AG04450 (cell line): ENCODE measurements at regions of chr20 and their contacts with region 1.

Region 1: DNA sequence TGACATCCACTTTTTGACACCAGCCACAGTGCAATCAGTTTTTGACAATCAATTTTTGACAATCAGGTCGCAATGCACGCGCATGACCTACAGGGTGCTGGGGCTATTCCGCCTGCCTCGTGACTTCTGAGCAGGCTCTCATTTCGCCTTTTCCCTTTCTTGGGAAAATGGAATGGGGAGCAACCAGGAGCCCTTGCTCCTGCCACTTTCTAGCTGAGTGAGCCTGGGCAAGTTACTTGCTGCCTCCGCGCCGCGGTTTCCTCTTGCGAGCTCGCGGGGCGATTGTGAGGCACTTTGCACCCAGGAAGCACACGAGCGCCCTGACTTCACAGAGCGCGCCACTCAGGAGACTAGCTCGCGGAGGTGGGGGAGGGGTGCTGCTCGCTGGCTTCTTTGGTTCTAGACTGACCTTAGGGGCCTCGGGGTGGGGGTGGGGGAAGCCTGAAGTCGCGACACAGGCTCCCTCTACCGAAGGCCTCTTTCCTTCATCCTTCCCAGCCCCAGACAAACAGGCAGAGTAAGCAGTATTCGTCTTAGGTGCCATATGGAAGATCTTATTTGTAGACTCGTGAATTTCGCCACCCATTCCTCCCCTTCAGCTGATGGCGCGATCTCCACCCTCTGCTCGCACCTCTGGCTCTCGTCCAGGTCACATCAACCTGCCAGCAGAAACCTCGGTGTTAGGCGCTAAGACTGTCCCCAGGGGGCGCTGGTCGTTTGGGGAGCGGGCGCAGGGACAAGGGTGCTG is 4.6 kb downstream of the TP53TG5 start:
- DNase-seq: no peak
- H3K4me3 ChIP-seq: peak overlapping the region; percentile 52
- H3K27ac ChIP-seq: no peak overlapping the region
- H3K27me3 ChIP-seq: no peaks in the 10 kb centered on the region
- CTCF ChIP-seq: peak; percentile 88

Region 2: DNA sequence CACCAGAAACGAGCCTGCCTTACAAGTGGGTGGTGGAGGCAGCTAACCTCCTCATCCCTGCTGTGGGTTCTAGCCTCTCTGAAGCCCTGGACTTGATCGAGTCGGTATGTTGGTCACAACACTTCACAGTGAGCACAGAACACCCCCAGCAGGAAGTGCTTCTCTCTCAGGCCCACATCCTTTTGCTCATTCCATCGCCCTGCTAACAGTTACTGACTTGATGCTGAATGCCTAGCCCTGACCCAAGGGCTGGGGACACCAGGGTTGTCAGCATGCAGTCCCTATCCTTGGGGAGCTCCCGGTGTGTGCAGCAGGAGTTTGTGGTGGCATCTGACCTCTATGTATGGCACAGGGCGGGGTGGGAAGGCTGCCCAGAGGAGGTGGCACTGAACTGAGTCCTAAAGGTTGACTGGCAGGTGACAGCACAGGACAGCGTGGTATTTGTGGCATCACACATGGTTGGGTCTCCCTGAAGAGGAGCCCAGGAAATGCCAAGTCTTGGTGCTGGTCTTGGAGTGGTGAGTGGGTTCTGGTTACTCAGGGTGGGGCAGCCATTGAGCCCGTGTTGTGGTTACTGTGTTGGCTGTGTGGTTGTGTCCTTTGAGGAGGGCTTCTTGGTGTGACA is 1673.5 kb before region 1 on chr20:
- CTCF ChIA-PET with region 1: no interaction called
- POLR2A ChIA-PET with region 1: no interaction called
- DNase-seq: no peak
- H3K4me3 ChIP-seq: no peak overlapping the region
- H3K27ac ChIP-seq: no peak overlapping the region
- H3K27me3 ChIP-seq: no peaks in the 10 kb centered on the region
- CTCF ChIP-seq: no peak

Region 3: DNA sequence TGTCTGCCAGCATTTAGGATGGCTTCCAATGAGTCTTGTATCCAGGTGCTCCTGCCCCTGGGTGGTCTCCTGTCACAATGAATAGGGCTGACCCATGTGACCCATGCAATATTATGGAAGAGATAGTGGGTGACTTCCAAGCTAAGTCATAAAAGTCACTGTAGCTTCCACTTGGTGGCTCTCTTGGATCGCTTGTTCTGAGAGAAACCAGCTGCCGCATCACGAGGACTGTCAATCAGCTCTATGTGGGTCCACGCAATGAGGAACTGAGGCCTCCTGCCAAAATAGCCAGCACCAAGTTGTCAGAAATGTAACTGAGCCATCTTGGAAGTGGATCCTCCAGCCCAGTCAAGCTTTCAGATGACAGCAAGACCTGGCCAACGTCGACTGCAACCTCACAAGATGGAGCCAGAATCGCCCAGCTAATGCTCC is 50.6 kb before region 1 on chr20:
- CTCF ChIA-PET with region 1: interaction called, 23 read pairs
- POLR2A ChIA-PET with region 1: no interaction called
- DNase-seq: no peak
- H3K4me3 ChIP-seq: no peak overlapping the region
- H3K27ac ChIP-seq: peak overlapping the region; percentile 31
- H3K27me3 ChIP-seq: no peaks in the 10 kb centered on the region
- CTCF ChIP-seq: no peak

Region 4: GRCh38 chr20:45355209-45356084 is 18.1 kb before region 1 on chr20:
- CTCF ChIA-PET with region 1: interaction called, 29 read pairs
- POLR2A ChIA-PET with region 1: no interaction called
- DNase-seq: no peak
- H3K4me3 ChIP-seq: peak overlapping the region; percentile 15; the same call in 1 of the 2 replicates
- H3K27ac ChIP-seq: peak overlapping the region; percentile 73
- H3K27me3 ChIP-seq: no peaks in the 10 kb centered on the region
- CTCF ChIP-seq: no peak

Region 5: GRCh38 chr20:45392733-45393132 is 19.2 kb after region 1 on chr20:
- CTCF ChIA-PET with region 1: interaction called, 27 read pairs
- POLR2A ChIA-PET with region 1: no interaction called
- DNase-seq: no peak
- H3K4me3 ChIP-seq: no peak overlapping the region
- H3K27ac ChIP-seq: no peak overlapping the region
- H3K27me3 ChIP-seq: no peaks in the 10 kb centered on the region
- CTCF ChIP-seq: no peak

Region 6: DNA sequence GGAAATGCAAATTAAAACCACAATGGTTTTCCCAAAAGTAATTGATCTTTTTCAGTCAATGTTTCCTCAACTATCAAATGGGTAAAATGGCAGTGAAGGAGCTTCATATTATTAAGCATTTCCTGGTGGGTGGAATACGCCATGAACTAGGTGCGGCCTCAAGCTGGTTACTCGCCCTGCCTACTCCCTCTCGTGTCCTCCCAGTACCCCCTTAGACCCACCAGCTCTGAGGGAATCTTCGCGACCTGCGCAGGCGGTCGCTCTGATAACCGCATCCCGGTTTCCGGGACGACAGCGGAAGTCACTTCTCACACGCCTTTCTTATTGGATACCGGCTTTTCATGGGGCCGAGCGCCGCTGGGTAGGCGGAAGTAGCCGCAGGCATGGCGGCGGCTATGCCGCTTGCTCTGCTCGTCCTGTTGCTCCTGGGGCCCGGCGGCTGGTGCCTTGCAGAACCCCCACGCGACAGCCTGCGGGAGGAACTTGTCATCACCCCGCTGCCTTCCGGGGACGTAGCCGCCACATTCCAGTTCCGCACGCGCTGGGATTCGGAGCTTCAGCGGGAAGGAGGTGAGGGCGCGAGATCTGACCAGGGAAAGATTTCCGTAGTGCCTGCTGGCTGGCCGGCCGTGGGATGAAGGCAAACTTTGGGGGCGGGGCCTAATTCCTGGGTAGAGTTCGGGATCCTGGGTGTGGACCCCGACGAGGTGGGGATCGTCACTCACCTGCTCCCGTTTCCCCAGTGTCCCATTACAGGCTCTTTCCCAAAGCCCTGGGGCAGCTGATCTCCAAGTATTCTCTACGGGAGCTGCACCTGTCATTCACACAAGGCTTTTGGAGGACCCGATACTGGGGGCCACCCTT is 42.5 kb after region 1 on chr20 and contains the start of gene PIGT:
- CTCF ChIA-PET with region 1: interaction called, 36 read pairs
- POLR2A ChIA-PET with region 1: no interaction called
- DNase-seq: no peak
- H3K4me3 ChIP-seq: peak within 1 kb of the TSS; percentile 93
- H3K27ac ChIP-seq: peak within 1 kb of the TSS; percentile 48
- H3K27me3 ChIP-seq: no peaks in the 10 kb centered on the region
- CTCF ChIP-seq: no peak
- polyA plus RNA-seq, gene PIGT: 114 and 140 TPM in 2 replicates